Esophagus muscularis mucosa (tissue), 4 donors: ENCODE measurements at regions of chr2 and their contacts with region 1.

Region 1: GRCh38 chr2:241239552-241240202 is 51.2 kb downstream of the ANO7 start:
- DNase-seq: no peak
- H3K4me3 ChIP-seq: no peak overlapping the region
- H3K27ac ChIP-seq: no peak overlapping the region
- H3K4me1 ChIP-seq: no peaks in the 10 kb centered on the region
- H3K27me3 ChIP-seq: no peaks in the 10 kb centered on the region
- CTCF ChIP-seq: no peak
- EP300 ChIP-seq: no peak
- POLR2A ChIP-seq: no peak

Region 2: DNA sequence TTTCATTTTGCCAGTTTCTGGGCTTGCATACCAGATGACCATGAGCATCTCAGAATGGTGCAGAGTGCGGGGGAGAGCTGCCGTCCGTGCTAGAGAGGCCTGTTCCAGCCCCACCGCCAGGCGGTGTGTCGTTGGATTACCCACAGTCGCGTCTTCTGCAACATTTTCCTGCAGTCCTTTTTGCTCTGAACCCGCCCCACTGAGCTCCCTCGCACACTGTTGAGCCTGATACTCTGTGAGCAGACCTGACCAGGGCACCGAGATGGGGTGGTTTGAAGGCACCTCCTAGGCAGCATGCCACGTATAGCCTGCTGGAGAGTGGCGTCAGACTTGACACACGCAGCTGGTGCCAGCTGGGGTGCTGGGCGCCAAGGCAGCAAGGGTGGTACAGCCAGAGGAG is 71.3 kb before region 1 on chr2:
- intact Hi-C with region 1: no loop called
- DNase-seq: no peak
- H3K4me3 ChIP-seq: no peak overlapping the region
- H3K27ac ChIP-seq: no peak overlapping the region
- H3K4me1 ChIP-seq: no peaks in the 10 kb centered on the region
- H3K27me3 ChIP-seq: no peaks in the 10 kb centered on the region
- CTCF ChIP-seq: no peak
- EP300 ChIP-seq: no peak
- POLR2A ChIP-seq: no peak

Region 3: GRCh38 chr2:241217320-241218031 is 22.2 kb before region 1 on chr2:
- intact Hi-C with region 1: loop called (anchors 1 kb)
- DNase-seq: no peak
- H3K4me3 ChIP-seq: peak overlapping the region; percentile 53 to 70 (median 60)
- H3K27ac ChIP-seq: peak overlapping the region; percentile 83 to 94 (median 90)
- H3K4me1 ChIP-seq: peaks cover 7 to 27% (median 16%) of the 10 kb centered on the region in 4 donors
- H3K27me3 ChIP-seq: no peaks in the 10 kb centered on the region
- CTCF ChIP-seq: peak in 1 of 3 experiments; percentile 3
- EP300 ChIP-seq: no peak
- POLR2A ChIP-seq: no peak

Region 4: GRCh38 chr2:241309684-241310117 is 70.0 kb after region 1 on chr2:
- intact Hi-C with region 1: no loop called
- DNase-seq: no peak
- H3K4me3 ChIP-seq: no peak overlapping the region
- H3K27ac ChIP-seq: no peak overlapping the region
- H3K4me1 ChIP-seq: peaks cover 19 to 51% (median 40%) of the 10 kb centered on the region in 4 donors
- H3K27me3 ChIP-seq: no peaks in the 10 kb centered on the region
- CTCF ChIP-seq: no peak
- EP300 ChIP-seq: no peak
- POLR2A ChIP-seq: no peak

Region 5: DNA sequence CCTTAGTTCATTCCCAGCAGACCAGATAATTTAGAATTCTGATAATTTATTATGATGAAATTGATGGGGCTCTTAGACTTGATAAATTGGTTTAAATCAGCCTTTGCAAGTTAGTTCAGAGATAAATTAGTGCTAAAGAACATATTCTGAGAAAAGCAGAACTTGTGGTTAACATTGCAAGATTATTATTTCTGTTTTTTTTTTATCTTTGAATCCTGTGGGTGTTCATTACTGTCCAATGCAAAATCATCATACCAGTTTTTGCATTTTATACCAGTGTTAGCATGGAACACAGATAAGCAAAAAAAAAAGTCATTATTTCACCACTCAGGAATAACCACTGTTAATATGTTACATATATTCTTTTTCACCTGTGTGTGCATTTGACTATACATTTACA is 85.1 kb after region 1 on chr2:
- intact Hi-C with region 1: no loop called
- DNase-seq: no peak
- H3K4me3 ChIP-seq: no peak overlapping the region
- H3K27ac ChIP-seq: no peak overlapping the region
- H3K4me1 ChIP-seq: peaks cover 34 to 57% (median 53%) of the 10 kb centered on the region in 4 donors
- H3K27me3 ChIP-seq: no peaks in the 10 kb centered on the region
- CTCF ChIP-seq: no peak
- EP300 ChIP-seq: no peak
- POLR2A ChIP-seq: no peak